ENCODE measurements at regions of chr10 and their contacts with region 1.

Region 1: GRCh38 chr10:74151056-74151878 is at the start of gene ADK:
- DNase-seq: peak; percentile 99 to 100 (median 99)
- H3K4me3 ChIP-seq: peak within 1 kb of the TSS; percentile 75 to 98 (median 93)
- H3K27ac ChIP-seq: peak within 1 kb of the TSS; percentile 98 to 99
- H3K4me1 ChIP-seq: peaks cover 8 to 31% (median 19%) of the 10 kb centered on the region in 4 experiments
- H3K27me3 ChIP-seq: no peaks in the 10 kb centered on the region

Region 2: GRCh38 chr10:74137992-74138391 is 13.3 kb before region 1 on chr10:
- CTCF ChIA-PET with region 1: interaction called, 10 read pairs
- POLR2A ChIA-PET with region 1: no interaction called
- DNase-seq: peak in 2 of 3 donors; percentile 18 to 31
- H3K4me3 ChIP-seq: no peak overlapping the region
- H3K27ac ChIP-seq: no peak overlapping the region
- H3K4me1 ChIP-seq: no peaks in the 10 kb centered on the region
- H3K27me3 ChIP-seq: no peaks in the 10 kb centered on the region

Region 3: DNA sequence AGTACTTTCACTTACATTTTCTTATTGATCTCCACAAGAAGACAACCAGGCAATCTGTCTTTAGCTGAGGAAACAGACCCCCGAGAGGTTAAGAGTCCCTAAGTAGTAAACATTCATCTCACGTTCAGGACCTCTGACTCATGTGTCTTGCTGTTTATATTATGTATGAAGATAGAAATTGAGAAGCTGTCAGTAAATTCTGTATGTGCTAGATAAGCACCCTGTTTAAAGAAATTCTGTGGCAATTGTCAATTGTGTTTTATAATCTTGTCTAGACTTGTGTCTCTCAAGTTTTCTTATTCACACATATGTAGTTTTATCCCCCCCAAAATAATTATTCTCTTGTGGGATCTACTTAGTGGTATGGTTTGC is 14.2 kb after region 1 on chr10:
- CTCF ChIA-PET with region 1: interaction called, 34 read pairs
- POLR2A ChIA-PET with region 1: interaction called, 8 read pairs
- DNase-seq: peak in 2 of 3 donors; percentile 27 to 58
- H3K4me3 ChIP-seq: no peak overlapping the region
- H3K27ac ChIP-seq: no peak overlapping the region
- H3K4me1 ChIP-seq: peaks cover 8 to 65% (median 28%) of the 10 kb centered on the region in 4 experiments
- H3K27me3 ChIP-seq: no peaks in the 10 kb centered on the region

Measured in common myeloid progenitor, CD34-positive (primary cell).